Gastrocnemius medialis (tissue), 4 donors: ENCODE measurements at regions of chr9 and their contacts with region 1.

Region 1: DNA sequence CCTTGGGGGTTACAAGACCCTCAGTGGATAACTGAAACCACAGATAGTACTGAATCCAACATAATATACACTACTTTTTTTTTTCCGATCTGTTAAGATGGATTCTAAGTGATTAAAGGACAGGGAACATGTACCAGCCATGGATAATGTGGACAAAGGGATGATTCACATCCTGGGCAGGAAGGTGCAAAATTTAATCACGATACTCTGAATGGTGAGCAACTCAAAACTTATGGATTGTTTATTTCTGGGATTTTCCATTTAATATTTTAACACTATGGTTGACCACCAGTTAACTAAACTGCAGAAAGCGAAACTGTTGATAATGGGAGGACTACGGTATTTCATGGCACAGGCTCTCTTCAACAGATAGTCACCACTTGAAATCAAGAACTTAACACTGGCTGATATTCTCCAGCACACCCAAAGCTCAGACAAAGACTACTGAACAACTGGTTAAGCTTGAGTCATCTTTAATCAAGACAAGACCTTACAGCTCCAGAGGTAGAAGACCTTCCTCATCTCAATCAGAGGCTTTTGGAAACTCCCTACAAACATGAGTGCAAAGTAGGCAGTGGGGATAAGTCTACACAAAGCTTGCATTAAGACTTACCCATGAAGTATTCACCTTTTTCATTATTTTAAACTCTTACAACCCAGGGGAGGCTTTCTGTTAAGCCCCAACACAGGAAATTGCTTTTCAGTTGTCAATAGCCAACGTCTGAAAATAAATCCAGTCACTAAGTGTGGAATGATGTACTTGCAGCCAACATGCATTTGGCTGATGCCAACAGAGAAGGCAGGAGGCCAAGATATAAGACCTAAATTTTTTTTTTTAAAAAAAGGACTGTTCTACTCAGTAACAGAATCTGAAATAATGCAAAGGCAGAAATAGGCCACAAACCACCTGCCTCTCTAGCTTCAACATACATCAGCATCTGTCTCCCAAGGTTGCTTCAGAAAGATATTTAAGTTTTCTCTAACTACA is 78.7 kb downstream of the ELAVL2 start:
- DNase-seq: no peak
- ATAC-seq: no peak
- H3K4me3 ChIP-seq: no peak overlapping the region
- H3K27ac ChIP-seq: no peak overlapping the region
- H3K4me1 ChIP-seq: no peaks in the 10 kb centered on the region
- H3K27me3 ChIP-seq: no peaks in the 10 kb centered on the region
- CTCF ChIP-seq: no peak
- POLR2A ChIP-seq: no peak

Region 2: DNA sequence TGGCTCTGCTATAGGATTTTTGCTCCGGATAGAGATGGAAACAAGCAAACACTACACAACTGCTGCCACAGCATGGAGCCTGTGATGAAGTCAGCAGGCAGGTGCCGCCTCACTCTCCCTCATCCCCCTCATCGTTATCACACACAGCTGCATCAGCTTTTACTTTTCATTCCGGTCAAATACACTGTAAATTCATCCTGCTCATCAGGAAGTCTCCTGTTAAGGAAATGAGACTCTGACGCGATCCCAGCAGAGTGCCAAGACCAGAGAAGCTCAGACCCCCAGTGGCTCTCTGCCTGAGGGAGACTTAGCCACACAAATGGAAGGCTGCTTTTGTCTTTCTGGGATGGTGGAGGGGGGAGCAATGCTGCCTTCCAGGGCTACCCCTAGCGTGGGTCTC is 191.5 kb before region 1 on chr9:
- in situ Hi-C with region 1: no loop called
- intact Hi-C with region 1: no loop called
- DNase-seq: no peak
- ATAC-seq: no peak
- H3K4me3 ChIP-seq: no peak overlapping the region
- H3K27ac ChIP-seq: no peak overlapping the region
- H3K4me1 ChIP-seq: no peaks in the 10 kb centered on the region
- H3K27me3 ChIP-seq: no peaks in the 10 kb centered on the region
- CTCF ChIP-seq: no peak
- POLR2A ChIP-seq: no peak

Region 3: GRCh38 chr9:23638837-23639426 is 108.5 kb before region 1 on chr9:
- in situ Hi-C with region 1: loop called in 1 of 4 experiments (anchors 25 kb)
- intact Hi-C with region 1: no loop called
- DNase-seq: no peak
- ATAC-seq: no peak
- H3K4me3 ChIP-seq: no peak overlapping the region
- H3K27ac ChIP-seq: no peak overlapping the region
- H3K4me1 ChIP-seq: no peaks in the 10 kb centered on the region
- H3K27me3 ChIP-seq: no peaks in the 10 kb centered on the region
- CTCF ChIP-seq: no peak
- POLR2A ChIP-seq: no peak

Region 4: GRCh38 chr9:23682891-23683431 is 64.4 kb before region 1 on chr9:
- in situ Hi-C with region 1: no loop called
- intact Hi-C with region 1: no loop called
- DNase-seq: no peak
- ATAC-seq: no peak
- H3K4me3 ChIP-seq: no peak overlapping the region
- H3K27ac ChIP-seq: peak overlapping the region in 1 of 4 donors; percentile 12
- H3K4me1 ChIP-seq: peaks cover 0 to 6% of the 10 kb centered on the region in 2 donors
- H3K27me3 ChIP-seq: no peaks in the 10 kb centered on the region
- CTCF ChIP-seq: no peak
- POLR2A ChIP-seq: no peak

Region 5: DNA sequence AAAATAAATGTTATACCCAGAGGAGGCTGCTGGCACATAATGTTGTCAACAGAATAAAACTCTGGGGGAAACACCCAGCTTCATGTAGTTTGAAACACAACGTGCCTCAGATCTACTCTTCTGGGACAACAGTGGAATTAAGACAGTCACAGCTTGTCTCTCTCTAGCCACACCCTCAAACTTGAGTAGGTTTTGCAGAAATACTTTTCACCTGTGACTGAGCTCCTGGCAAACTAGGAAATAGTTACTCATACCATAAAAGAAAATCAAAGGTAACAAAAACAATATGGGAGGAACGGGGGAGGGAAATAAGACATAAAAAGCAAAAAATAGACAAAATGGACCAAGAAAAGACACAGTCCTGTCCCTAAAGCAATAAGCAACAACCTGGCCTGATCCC is 64.3 kb after region 1 on chr9:
- in situ Hi-C with region 1: no loop called
- intact Hi-C with region 1: no loop called
- DNase-seq: no peak
- ATAC-seq: no peak
- H3K4me3 ChIP-seq: no peak overlapping the region
- H3K27ac ChIP-seq: no peak overlapping the region
- H3K4me1 ChIP-seq: no peaks in the 10 kb centered on the region
- H3K27me3 ChIP-seq: peaks cover 0 to 4% (median under 1%) of the 10 kb centered on the region in 3 donors
- CTCF ChIP-seq: no peak
- POLR2A ChIP-seq: no peak

Region 6: GRCh38 chr9:23826120-23826629 is 78.8 kb after region 1 on chr9 and contains the start of gene ELAVL2:
- in situ Hi-C with region 1: loop called in 1 of 4 experiments (anchors 25 kb)
- intact Hi-C with region 1: no loop called
- DNase-seq: peak; percentile 45 to 79
- ATAC-seq: peak; percentile 73 to 85
- H3K4me3 ChIP-seq: peak within 1 kb of the TSS; percentile 41 to 64 (median 48)
- H3K27ac ChIP-seq: no peak within 1 kb of the TSS
- H3K4me1 ChIP-seq: peaks cover 16 to 21% of the 10 kb centered on the region in 2 donors
- H3K27me3 ChIP-seq: peaks cover 67 to 88% (median 82%) of the 10 kb centered on the region in 3 donors
- CTCF ChIP-seq: no peak
- POLR2A ChIP-seq: no peak
- total RNA-seq, gene ELAVL2: not detected

Region 7: DNA sequence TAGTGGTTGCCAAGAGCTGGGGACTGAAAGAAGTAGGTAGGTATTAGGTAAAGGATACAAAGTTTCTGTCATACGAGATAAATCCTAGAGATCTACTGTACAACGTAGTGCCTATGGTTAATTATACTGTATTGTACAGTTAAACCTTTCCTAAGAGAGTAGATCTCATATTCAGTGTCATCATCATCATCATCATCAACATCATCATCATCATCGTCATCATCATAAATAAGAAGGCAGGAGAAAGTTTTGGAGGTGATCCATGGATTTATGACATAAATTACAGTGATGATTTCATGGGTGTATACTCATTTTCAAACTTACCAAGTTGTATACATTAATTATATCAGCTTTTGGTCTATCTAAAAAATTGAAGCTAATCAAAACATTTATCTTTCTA is 560.6 kb after region 1 on chr9:
- in situ Hi-C with region 1: no loop called
- intact Hi-C with region 1: no loop called
- DNase-seq: no peak
- ATAC-seq: no peak
- H3K4me3 ChIP-seq: no peak overlapping the region
- H3K27ac ChIP-seq: no peak overlapping the region
- H3K4me1 ChIP-seq: no peaks in the 10 kb centered on the region
- H3K27me3 ChIP-seq: no peaks in the 10 kb centered on the region
- CTCF ChIP-seq: no peak
- POLR2A ChIP-seq: no peak